ENCODE measurements at regions of chrX and their contacts with region 1.

Region 1: DNA sequence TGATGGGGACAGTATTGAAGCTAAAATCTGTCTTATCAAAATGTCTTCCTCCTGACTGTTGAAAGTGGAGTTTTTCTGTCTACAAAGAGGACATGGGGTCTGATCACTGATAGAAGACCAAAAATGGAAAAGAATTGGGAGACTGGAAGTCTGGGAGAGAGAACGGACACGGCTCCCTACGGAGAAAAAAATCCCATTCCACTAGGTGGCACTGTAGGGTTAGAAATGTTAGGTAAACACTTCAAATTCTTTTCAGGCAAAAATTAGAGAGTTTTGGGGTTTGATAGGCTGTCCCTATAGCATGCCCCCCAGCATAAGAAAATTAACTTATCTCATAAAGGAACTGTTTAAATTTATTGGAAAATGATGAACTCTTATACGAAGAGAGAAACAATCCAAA is 200.5 kb downstream of the FAM133A start:
- DNase-seq: peak; percentile 1
- ATAC-seq: no peak
- H3K4me3 ChIP-seq: no peak overlapping the region
- H3K27ac ChIP-seq: no peak overlapping the region
- H3K4me1 ChIP-seq: no peaks in the 10 kb centered on the region
- H3K27me3 ChIP-seq: no peaks in the 10 kb centered on the region
- CTCF ChIP-seq: peak; percentile 55
- EP300 ChIP-seq: no peak
- POLR2A ChIP-seq: no peak
- RAD21 ChIP-seq: no peak

Region 2: GRCh38 chrX:93932476-93933220 is 58.1 kb after region 1 on chrX:
- CTCF ChIA-PET with region 1: no interaction called
- POLR2A ChIA-PET with region 1: no interaction called
- in situ Hi-C with region 1: no loop called
- intact Hi-C with region 1: no loop called
- DNase-seq: no peak
- ATAC-seq: no peak
- H3K4me3 ChIP-seq: no peak overlapping the region
- H3K27ac ChIP-seq: no peak overlapping the region
- H3K4me1 ChIP-seq: no peaks in the 10 kb centered on the region
- H3K27me3 ChIP-seq: no peaks in the 10 kb centered on the region
- CTCF ChIP-seq: no peak
- EP300 ChIP-seq: no peak
- POLR2A ChIP-seq: no peak
- RAD21 ChIP-seq: no peak

Region 3: GRCh38 chrX:94058728-94059382 is 184.3 kb after region 1 on chrX:
- CTCF ChIA-PET with region 1: no interaction called
- POLR2A ChIA-PET with region 1: no interaction called
- in situ Hi-C with region 1: loop called (anchors 25 kb)
- intact Hi-C with region 1: loop called (anchors 1 kb)
- DNase-seq: peak; percentile 3
- ATAC-seq: peak; percentile 43; the same call in 1 of the 3 replicates
- H3K4me3 ChIP-seq: no peak overlapping the region
- H3K27ac ChIP-seq: no peak overlapping the region
- H3K4me1 ChIP-seq: no peaks in the 10 kb centered on the region
- H3K27me3 ChIP-seq: no peaks in the 10 kb centered on the region
- CTCF ChIP-seq: peak; percentile 38
- EP300 ChIP-seq: no peak
- POLR2A ChIP-seq: no peak
- RAD21 ChIP-seq: no peak

Region 4: DNA sequence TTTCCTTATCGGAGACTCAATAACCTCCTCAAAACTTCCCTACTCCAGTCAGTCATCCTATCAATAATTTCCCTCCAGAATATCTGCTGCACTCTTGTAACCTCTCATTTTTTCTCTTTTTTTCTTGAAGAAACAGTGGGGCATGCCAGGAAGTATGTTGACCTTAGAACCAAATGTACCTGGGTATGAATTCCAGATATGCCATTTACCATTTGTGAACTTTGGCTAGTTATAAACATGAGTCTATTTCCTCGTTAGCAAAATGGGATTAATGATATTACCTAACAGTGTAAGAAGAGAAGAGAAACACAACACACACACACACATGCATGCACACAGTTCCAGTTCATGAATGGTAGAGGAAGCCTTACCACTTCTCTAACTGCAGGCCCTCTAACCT is 377.7 kb after region 1 on chrX:
- CTCF ChIA-PET with region 1: no interaction called
- POLR2A ChIA-PET with region 1: no interaction called
- in situ Hi-C with region 1: no loop called
- intact Hi-C with region 1: no loop called
- DNase-seq: no peak
- ATAC-seq: no peak
- H3K4me3 ChIP-seq: no peak overlapping the region
- H3K27ac ChIP-seq: no peak overlapping the region
- H3K4me1 ChIP-seq: no peaks in the 10 kb centered on the region
- H3K27me3 ChIP-seq: no peaks in the 10 kb centered on the region
- CTCF ChIP-seq: no peak
- EP300 ChIP-seq: no peak
- POLR2A ChIP-seq: no peak
- RAD21 ChIP-seq: no peak

Region 5: GRCh38 chrX:94288325-94288724 is 413.8 kb after region 1 on chrX:
- CTCF ChIA-PET with region 1: no interaction called
- POLR2A ChIA-PET with region 1: no interaction called
- in situ Hi-C with region 1: no loop called
- intact Hi-C with region 1: loop called (anchors 2 kb)
- DNase-seq: no peak
- ATAC-seq: no peak
- H3K4me3 ChIP-seq: no peak overlapping the region
- H3K27ac ChIP-seq: no peak overlapping the region
- H3K4me1 ChIP-seq: no peaks in the 10 kb centered on the region
- H3K27me3 ChIP-seq: no peaks in the 10 kb centered on the region
- CTCF ChIP-seq: no peak
- EP300 ChIP-seq: no peak
- POLR2A ChIP-seq: no peak
- RAD21 ChIP-seq: no peak